ENCODE measurements at regions of chr3 and their contacts with region 1.

Region 1: DNA sequence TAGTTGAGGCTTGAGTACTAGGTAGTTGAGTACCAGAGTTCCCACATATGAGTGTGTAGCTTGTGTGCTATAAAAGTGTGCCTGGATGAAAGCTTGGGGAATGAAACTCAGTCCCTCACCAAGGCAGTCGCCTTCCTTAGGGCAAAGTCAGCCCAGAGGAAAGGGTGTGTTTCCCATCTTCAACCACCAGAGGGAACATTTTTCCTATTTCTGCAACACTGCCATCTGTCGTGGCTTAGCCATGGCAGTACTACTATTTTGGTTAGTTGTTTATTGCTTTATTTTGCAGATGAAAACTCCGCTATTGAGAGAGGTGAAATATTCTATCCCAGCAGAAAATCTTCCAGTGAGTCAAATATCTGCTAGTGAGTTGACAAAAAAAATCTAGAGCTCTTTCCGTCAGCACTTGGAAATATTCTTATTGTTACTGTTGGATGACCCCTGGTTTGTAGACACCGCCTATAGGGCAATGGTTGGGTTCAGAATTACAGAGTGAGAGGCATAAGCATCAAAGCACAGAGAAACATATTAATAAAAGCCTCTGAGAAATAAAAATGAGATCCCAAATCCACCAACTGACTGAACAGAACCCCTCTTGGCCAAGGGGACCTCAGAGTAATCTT is 239.9 kb downstream of the CPNE4 start:
- DNase-seq: peak; percentile 16
- H3K4me3 Mint-ChIP-seq: no peak overlapping the region
- H3K27ac Mint-ChIP-seq: no peak overlapping the region
- H3K4me1 Mint-ChIP-seq: peaks cover 8% of the 10 kb centered on the region
- H3K27me3 Mint-ChIP-seq: peaks cover 13% of the 10 kb centered on the region

Region 2: GRCh38 chr3:130997291-130997690 is 797.6 kb before region 1 on chr3:
- CTCF ChIA-PET with region 1: no interaction called
- POLR2A ChIA-PET with region 1: no interaction called
- intact Hi-C with region 1: no loop called
- DNase-seq: no peak
- H3K4me3 Mint-ChIP-seq: no peak overlapping the region
- H3K27ac Mint-ChIP-seq: no peak overlapping the region
- H3K4me1 Mint-ChIP-seq: no peaks in the 10 kb centered on the region
- H3K27me3 Mint-ChIP-seq: no peaks in the 10 kb centered on the region

Region 3: DNA sequence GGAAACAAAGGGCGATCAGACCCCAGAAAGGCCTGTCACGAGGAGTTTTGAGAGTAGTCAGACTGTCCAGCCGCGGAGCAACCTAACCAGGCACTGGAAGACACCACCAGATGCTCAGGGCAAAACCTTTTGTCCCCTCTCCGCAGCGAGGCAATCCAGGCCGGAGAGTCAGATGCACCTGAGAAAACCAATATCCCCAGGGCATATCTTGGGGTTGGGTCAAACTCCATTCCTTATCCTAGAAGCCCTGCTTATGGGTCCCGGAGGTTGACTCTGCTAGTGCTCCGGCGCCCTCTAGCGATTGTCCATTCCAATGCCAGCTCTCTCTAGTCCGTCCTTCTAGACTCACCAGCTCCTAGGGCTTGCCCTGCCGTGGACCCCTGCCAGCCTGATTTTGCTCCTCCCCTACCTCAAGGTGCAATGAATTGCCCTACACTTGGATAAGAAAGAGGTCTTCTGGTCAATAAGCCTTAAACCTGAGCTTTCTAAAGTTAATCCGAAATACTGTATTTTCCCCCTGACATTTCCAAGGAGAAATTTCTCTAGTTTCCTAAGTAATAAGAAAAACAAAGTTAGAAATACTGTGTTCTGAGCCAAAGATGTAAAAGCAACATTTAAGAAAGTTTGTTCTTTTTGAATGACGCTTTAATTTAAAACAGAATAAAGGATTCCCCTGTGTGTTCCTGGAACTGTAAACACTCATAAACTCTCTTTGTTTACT is 234.5 kb after region 1 on chr3:
- CTCF ChIA-PET with region 1: interaction called, 9 read pairs
- POLR2A ChIA-PET with region 1: no interaction called
- intact Hi-C with region 1: loop called (anchors 1 kb)
- DNase-seq: peak; percentile 77
- H3K4me3 Mint-ChIP-seq: no peak overlapping the region
- H3K27ac Mint-ChIP-seq: no peak overlapping the region
- H3K4me1 Mint-ChIP-seq: peaks cover 5% of the 10 kb centered on the region
- H3K27me3 Mint-ChIP-seq: peaks cover 46% of the 10 kb centered on the region

Region 4: GRCh38 chr3:132180337-132180791 is 385.5 kb after region 1 on chr3:
- CTCF ChIA-PET with region 1: interaction called, 3 read pairs
- POLR2A ChIA-PET with region 1: no interaction called
- intact Hi-C with region 1: loop called (anchors 1 kb)
- DNase-seq: no peak
- H3K4me3 Mint-ChIP-seq: no peak overlapping the region
- H3K27ac Mint-ChIP-seq: no peak overlapping the region
- H3K4me1 Mint-ChIP-seq: peaks cover 6% of the 10 kb centered on the region
- H3K27me3 Mint-ChIP-seq: peaks cover 3% of the 10 kb centered on the region

Region 5: GRCh38 chr3:132641837-132642538 is 847.1 kb after region 1 on chr3:
- CTCF ChIA-PET with region 1: no interaction called
- POLR2A ChIA-PET with region 1: no interaction called
- intact Hi-C with region 1: no loop called
- DNase-seq: no peak
- H3K4me3 Mint-ChIP-seq: no peak overlapping the region
- H3K27ac Mint-ChIP-seq: no peak overlapping the region
- H3K4me1 Mint-ChIP-seq: no peaks in the 10 kb centered on the region
- H3K27me3 Mint-ChIP-seq: no peaks in the 10 kb centered on the region